ENCODE measurements at regions of chr15 and their contacts with region 1.

Region 1: DNA sequence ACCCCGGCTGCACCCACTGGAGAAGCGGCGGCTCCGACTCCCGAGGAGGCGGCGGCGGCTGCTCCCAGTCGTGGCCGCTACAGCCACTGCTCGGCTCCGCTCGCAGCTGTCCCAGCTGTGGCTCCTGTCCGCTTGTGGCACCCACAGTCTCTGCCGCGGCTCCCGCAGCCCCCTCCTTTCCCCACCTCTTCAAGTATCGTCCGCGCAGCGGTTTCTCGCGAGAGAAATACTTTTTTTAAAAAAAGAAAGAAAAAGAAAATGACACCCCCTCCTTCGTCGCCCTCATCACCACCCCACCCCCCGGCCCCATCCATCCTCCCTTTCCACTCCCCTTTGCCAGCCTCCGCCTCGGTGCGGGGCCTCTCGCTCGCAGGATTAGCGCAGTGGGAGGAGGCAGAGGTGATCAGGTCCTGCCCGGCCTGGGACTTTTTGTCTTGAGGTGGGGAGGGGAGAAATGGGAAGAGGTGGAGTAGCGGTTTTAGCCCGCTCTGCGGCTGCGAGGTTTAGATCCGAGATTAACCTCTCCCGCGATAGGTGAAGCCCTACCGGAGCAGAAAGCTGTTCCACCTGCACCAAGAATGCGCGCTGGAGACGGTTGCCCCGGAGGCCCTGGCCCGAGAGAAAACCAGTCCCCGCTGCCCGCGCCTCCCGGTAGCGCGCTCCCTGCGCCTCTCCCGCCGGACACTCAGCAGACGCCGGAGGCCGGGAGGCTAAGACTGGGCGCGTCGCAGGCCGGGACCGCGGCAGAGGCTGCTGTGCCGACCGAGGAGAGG is at the start of gene FBN1:
- DNase-seq: peak; percentile 95
- H3K4me3 ChIP-seq: peak within 1 kb of the TSS; percentile 82
- H3K27ac ChIP-seq: peak within 1 kb of the TSS; percentile 86
- H3K4me1 ChIP-seq: peaks cover 12% of the 10 kb centered on the region
- H3K27me3 ChIP-seq: no peaks in the 10 kb centered on the region
- total RNA-seq, gene FBN1: 1,478 and 1,559 TPM in 2 replicates

Region 2: GRCh38 chr15:48352474-48353072 is 293.2 kb before region 1 on chr15:
- in situ Hi-C with region 1: loop called (anchors 25 kb)
- DNase-seq: peak; percentile 76
- H3K4me3 ChIP-seq: peak overlapping the region; percentile 66
- H3K27ac ChIP-seq: no peak overlapping the region
- H3K4me1 ChIP-seq: peaks cover 25% of the 10 kb centered on the region
- H3K27me3 ChIP-seq: no peaks in the 10 kb centered on the region

Region 3: GRCh38 chr15:48541341-48542278 is 104.1 kb before region 1 on chr15:
- in situ Hi-C with region 1: loop called (anchors 25 kb)
- DNase-seq: peak; percentile 93
- H3K4me3 ChIP-seq: peak overlapping the region; percentile 60
- H3K27ac ChIP-seq: peak overlapping the region; percentile 94
- H3K4me1 ChIP-seq: peaks cover 84% of the 10 kb centered on the region
- H3K27me3 ChIP-seq: no peaks in the 10 kb centered on the region

Region 4: GRCh38 chr15:48975472-48976419 is 330.0 kb after region 1 on chr15:
- in situ Hi-C with region 1: no loop called
- DNase-seq: peak; percentile 94
- H3K4me3 ChIP-seq: peak overlapping the region; percentile 78
- H3K27ac ChIP-seq: no peak overlapping the region
- H3K4me1 ChIP-seq: 0 out of 2 replicates have a peak, but pooled peaks cover 5% of the 10 kb centered on the region
- H3K27me3 ChIP-seq: no peaks in the 10 kb centered on the region